A673 (cell line): ENCODE measurements at regions of chr1 and their contacts with region 1.

Region 1: GRCh38 chr1:64960731-64961130 is 5.6 kb downstream of the JAK1 start:
- DNase-seq: no peak
- H3K4me3 ChIP-seq: no peak overlapping the region
- H3K27ac ChIP-seq: peak overlapping the region; percentile 14
- H3K4me1 ChIP-seq: peaks cover 79% of the 10 kb centered on the region
- H3K27me3 ChIP-seq: no peaks in the 10 kb centered on the region
- CTCF ChIP-seq: no peak

Region 2: DNA sequence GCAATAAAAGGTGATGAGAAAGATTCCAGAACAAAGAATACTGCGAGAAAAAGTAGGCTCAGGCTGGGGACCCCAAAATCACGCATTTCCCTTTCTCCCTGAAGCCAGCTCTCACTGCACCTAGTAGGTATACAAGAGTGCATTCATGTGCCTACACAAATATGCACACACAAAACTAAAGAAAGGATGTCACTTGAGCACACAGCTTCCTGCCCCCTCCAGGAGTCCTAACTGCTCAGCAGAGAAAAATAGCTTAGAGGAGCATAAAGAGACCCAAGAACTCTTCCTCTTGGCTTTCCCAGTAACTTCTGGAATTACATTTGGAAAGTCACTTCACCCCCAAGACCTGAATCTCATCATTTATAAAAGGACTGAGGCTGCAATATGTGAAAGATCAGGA is 32.4 kb before region 1 on chr1:
- CTCF ChIA-PET with region 1: no interaction called
- POLR2A ChIA-PET with region 1: no interaction called
- intact Hi-C with region 1: loop called (anchors 5 kb)
- DNase-seq: no peak
- H3K4me3 ChIP-seq: no peak overlapping the region
- H3K27ac ChIP-seq: peak overlapping the region; percentile 70
- H3K4me1 ChIP-seq: peaks cover 69% of the 10 kb centered on the region
- H3K27me3 ChIP-seq: no peaks in the 10 kb centered on the region
- CTCF ChIP-seq: no peak